Heart left ventricle (tissue), 16 donors: ENCODE measurements at regions of chrX and their contacts with region 1.

Region 1: DNA sequence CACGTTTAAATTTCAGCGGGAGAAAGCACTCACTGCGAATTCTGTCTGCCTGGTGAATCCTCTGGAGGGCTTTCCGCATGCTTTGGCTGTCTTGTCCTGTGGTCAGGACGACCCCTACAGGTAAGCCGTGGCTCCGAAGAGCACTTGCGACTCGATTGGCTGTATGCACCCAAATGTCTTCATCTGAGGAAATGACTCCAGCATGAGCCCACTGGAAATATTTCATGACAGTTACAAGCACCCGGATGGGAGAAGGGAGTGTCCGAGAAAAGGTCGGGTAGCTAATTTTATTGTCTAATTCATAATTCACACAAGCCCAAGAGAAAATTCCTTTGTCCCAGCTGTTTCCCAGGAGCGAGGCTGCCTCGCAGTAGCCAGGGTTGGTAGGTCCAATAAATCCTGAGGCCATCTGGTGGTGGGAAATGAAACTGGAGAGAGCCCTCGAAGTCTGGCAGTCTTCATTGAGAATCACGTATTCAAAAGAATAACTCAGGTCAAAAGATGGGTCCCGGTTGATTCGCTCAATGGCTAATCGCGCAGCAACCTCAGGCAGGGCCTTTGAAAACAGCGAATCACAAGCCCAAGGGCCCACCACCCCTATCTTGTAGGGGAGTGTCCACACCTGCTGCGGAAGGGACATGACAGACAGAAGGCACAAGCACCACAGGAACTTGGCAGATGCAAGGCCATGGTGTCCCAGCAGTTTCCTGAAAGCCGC is 6.6 kb downstream of the GUCY2F start:
- DNase-seq: peak in 4 of 5 donors; percentile 9 to 31 (median 21)
- ATAC-seq: peak; percentile 32 to 80 (median 66)
- H3K4me3 ChIP-seq: peak overlapping the region in 5 of 12 donors; percentile 12 to 24 (median 22)
- H3K27ac ChIP-seq: no peak overlapping the region
- H3K4me1 ChIP-seq: peaks cover 0 to 7% (median 0%) of the 10 kb centered on the region in 12 donors
- H3K27me3 ChIP-seq: peaks cover 0 to 47% (median 0%) of the 10 kb centered on the region in 9 donors
- CTCF ChIP-seq: peak in 10 of 12 donors; percentile 31 to 56 (median 46)
- POLR2A ChIP-seq: no peak

Region 2: DNA sequence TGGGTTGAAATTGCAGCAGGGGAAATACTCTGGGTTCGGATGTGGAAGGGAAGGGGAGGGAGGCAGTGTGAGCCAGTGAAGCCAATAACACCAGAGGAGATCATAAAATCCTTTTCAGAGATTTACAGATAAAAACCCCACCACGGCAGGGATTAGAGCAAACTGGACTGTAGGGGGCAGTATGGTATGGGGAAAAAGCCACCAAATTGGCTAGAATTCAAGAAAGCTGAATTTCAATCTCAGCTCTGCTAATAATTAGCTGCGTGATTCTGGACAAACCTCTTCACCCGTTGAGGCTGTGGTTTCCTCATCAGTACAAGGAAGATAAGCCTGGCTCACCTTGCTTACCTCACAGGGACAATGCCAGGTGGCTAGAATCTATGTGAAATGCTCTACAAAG is 1275.6 kb before region 1 on chrX:
- intact Hi-C with region 1: loop called in 2 of 10 experiments (anchors 5 to 10 kb)
- DNase-seq: no peak
- ATAC-seq: no peak
- H3K4me3 ChIP-seq: no peak overlapping the region
- H3K27ac ChIP-seq: no peak overlapping the region
- H3K4me1 ChIP-seq: no peaks in the 10 kb centered on the region
- H3K27me3 ChIP-seq: peaks cover 0 to 61% (median 0%) of the 10 kb centered on the region in 9 donors
- CTCF ChIP-seq: peak; percentile 24 to 60 (median 46)
- POLR2A ChIP-seq: no peak

Region 3: GRCh38 chrX:108299101-108299591 is 1176.2 kb before region 1 on chrX:
- intact Hi-C with region 1: loop called in 1 of 10 experiments (anchors 10 kb)
- DNase-seq: no peak
- ATAC-seq: peak in 3 of 4 donors; percentile 47 to 64 (median 62)
- H3K4me3 ChIP-seq: no peak overlapping the region
- H3K27ac ChIP-seq: no peak overlapping the region
- H3K4me1 ChIP-seq: peaks cover 0 to 7% (median 0%) of the 10 kb centered on the region in 12 donors
- H3K27me3 ChIP-seq: peaks cover 0 to 25% (median 0%) of the 10 kb centered on the region in 9 donors
- CTCF ChIP-seq: no peak
- POLR2A ChIP-seq: no peak

Region 4: GRCh38 chrX:108699368-108699767 is 776.0 kb before region 1 on chrX:
- intact Hi-C with region 1: loop called in 4 of 10 experiments (anchors 5 to 10 kb)
- DNase-seq: no peak
- ATAC-seq: no peak
- H3K4me3 ChIP-seq: no peak overlapping the region
- H3K27ac ChIP-seq: no peak overlapping the region
- H3K4me1 ChIP-seq: no peaks in the 10 kb centered on the region
- H3K27me3 ChIP-seq: no peaks in the 10 kb centered on the region
- CTCF ChIP-seq: peak in 6 of 12 donors; percentile 16 to 34 (median 30)
- POLR2A ChIP-seq: no peak